RWPE1 (cell line): ENCODE measurements at regions of chr10 and their contacts with region 1.

Region 1: GRCh38 chr10:96229568-96230030 is 41.8 kb downstream of the BLNK start:
- DNase-seq: peak; percentile 68
- H3K27ac ChIP-seq: no peak overlapping the region
- CTCF ChIP-seq: peak; percentile 86

Region 2: DNA sequence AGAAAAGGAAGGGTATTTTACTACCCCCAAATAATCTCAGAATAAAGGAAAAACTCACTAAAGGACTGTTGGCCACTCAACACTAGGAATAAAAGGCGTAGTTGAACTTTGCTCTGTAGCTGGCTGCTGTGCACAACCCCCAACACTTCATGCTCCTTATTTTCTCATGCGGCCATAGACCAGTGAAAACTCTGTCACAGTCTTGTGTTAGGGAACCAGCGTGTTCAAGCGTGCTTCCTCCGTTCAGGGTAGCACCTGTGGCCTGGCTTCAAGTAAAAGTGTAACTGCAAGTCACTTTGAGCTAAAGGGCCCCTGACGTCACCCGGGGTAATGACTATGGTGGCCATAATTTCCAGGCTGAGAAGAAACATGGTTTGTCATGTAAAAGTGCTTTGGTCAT is 14.8 kb after region 1 on chr10:
- CTCF ChIA-PET with region 1: interaction called, 11 read pairs
- POLR2A ChIA-PET with region 1: no interaction called
- DNase-seq: no peak
- H3K27ac ChIP-seq: no peak overlapping the region
- CTCF ChIP-seq: no peak

Region 3: GRCh38 chr10:96255549-96256331 is 26.1 kb after region 1 on chr10:
- CTCF ChIA-PET with region 1: interaction called, 5 read pairs
- POLR2A ChIA-PET with region 1: interaction called, 10 read pairs
- DNase-seq: no peak
- H3K27ac ChIP-seq: no peak overlapping the region
- CTCF ChIP-seq: no peak

Region 4: DNA sequence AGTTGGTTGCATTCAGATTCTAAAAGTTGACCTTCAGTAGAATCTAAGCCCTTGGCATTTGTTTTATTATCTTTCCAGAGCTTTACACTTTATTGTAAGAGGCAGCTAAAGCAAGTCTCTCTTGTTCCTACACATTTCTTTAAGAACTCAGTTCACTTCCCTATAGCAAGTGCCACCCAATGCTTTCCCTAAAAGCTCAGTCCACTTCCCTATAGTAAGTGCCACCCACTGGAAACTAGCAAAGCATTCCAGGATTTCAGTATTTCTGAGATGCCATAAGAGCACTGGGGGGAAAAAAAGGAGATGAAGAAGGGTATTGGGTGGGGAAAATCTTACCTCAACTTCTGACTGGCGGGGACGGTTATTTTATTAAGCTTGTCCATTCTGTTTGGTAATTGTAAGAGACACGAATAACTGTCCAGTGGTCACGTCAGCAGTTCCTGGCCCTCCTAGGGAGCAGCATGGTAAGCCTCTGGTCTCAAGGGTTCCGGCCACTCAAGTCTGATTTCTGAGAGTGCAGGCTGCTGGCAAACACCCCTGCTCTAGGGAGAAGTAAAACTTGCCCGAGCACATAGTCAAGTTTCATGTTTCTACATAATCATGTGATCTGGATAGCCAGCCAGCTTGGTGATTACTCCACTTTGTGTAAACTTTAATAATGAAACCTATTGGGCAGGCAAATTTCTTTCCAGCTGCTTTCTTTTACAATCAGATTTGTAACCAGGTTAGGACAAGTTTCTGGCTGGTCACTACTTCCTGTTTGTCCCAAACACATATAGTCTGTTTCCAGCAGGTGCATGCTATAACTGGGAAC is 41.6 kb after region 1 on chr10 and contains the start of gene BLNK:
- CTCF ChIA-PET with region 1: interaction called, 14 read pairs
- POLR2A ChIA-PET with region 1: interaction called, 4 read pairs
- DNase-seq: peak; percentile 77
- H3K27ac ChIP-seq: peak within 1 kb of the TSS; percentile 53
- CTCF ChIP-seq: no peak

Region 5: DNA sequence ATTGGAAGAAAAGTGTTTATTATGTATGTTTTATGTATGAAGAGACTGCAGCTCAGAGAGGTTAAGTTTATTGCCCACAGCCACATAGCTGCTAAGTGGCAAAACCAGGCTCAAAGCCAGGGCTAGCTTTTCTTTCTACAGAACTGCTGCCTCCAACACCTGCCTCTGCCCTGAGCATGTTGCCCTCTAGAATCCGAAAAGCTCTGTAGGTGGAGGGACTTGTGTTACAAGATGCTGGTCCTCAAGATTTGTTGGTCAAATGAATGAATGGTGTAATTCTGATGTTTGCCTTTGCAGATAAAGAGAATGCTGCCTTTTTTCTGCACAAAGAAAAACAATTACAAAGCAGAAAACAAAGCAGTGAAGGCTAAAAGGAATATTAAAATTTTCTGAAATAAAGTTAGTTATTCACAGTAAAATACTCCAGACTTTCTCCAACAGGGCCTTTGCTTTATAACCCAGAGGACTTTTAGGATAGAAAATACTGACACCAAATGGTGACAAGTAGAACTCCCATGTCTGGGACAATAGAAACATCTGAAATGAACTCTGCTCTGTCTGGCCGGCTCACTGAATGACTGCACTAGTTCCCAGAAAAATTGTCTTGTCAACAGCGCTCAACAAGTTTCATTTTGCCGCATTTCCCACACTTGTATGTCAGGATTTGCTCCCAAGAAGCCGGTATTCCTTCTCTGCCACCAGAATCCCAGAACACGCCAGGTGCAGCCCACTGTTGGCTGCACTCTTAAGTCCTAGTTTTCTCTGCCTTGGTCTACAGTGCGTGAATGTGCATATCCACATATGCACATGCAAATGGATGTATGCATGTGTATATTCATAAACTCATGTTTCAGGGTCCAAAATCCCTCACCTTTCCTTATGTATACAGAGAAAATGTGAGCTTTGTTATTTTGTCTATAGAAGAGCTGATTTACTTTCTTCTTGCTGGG is 63.6 kb after region 1 on chr10:
- CTCF ChIA-PET with region 1: interaction called, 123 read pairs
- POLR2A ChIA-PET with region 1: no interaction called
- DNase-seq: peak; percentile 77
- H3K27ac ChIP-seq: no peak overlapping the region
- CTCF ChIP-seq: peak; percentile 59

Region 6: DNA sequence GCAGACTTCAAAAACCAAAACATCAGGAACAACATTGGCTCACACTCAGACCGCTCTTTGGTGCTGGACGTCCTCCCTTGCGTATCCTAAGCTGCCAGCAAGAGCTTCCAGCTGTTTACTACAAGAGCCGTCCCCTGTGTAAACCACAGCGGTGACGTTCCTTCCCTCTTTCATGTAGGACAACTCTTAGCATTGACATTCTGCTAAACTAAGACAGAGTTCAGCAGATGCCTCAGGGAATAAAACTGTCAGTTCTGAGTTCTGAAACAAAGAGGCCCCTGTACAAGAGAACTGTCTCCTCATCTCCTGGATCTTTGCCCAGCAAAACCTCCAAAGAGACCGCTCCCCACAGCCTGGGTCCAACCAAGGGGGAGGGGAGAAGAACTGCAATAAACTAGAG is 187.0 kb after region 1 on chr10:
- CTCF ChIA-PET with region 1: no interaction called
- POLR2A ChIA-PET with region 1: no interaction called
- DNase-seq: no peak
- H3K27ac ChIP-seq: no peak overlapping the region
- CTCF ChIP-seq: no peak